H1 (cell line): ENCODE measurements at regions of chr6 and their contacts with region 1.

Region 1: DNA sequence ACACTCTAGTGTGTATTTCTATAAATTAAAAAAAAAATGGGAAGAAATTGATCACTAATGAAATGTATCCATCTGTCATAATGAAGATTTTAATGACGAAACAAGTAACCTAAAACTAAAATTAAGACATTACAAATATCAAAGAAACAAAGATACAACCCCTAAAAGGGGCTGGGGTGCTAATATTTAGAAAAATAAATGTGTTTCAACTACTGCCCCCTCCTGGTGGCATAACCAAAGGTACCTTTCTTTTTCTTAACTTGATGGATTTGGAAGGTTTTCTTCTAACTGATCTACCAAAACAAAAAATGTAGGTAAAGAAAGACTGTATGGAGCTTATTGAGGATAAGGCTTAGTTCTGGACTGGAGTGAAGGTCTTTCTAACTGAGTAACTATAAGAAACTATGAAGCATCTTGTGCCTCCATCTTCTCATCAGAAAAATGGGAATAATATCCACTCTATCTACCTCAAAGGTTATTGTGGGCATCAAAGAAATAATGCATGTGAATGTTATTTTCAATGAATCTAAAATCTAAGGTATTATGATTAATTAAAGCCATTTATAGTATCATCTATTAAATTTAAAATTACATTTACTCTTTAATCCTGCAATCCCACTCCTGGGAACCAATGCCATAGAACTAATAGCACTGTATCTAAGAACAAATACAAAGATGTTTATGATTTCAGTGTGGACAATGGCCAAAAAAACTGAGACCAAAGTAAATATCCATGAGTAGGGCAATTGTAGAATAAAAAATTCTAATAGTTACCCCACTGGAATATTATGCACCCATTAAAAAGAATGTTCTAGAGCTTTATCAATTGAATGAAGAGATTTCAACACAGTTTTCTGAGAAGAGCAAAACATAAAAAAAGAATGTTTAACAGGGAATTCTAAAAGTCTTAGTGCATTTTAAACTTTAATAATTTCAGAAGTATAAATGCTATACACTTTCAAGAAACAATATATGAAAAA is 117.2 kb downstream of the BACH2 start:
- DNase-seq: no peak
- H3K4me3 ChIP-seq: no peak overlapping the region
- H3K27ac ChIP-seq: no peak overlapping the region
- H3K4me1 ChIP-seq: no peaks in the 10 kb centered on the region
- H3K27me3 ChIP-seq: no peaks in the 10 kb centered on the region; a peak in 1 of 7 replicates
- CTCF ChIP-seq: peak in 2 of 3 experiments; percentile 21 to 44; a peak in 2 of 4 replicates
- EP300 ChIP-seq: no peak
- POLR2A ChIP-seq: no peak
- RAD21 ChIP-seq: peak; percentile 28 to 37; a peak in 3 of 4 replicates

Region 2: GRCh38 chr6:89952686-89953085 is 226.8 kb before region 1 on chr6:
- CTCF ChIA-PET with region 1: interaction called, 13 read pairs
- POLR2A ChIA-PET with region 1: no interaction called
- DNase-seq: no peak
- H3K4me3 ChIP-seq: no peak overlapping the region
- H3K27ac ChIP-seq: no peak overlapping the region
- H3K4me1 ChIP-seq: no peaks in the 10 kb centered on the region
- H3K27me3 ChIP-seq: no peaks in the 10 kb centered on the region
- CTCF ChIP-seq: no peak
- EP300 ChIP-seq: no peak
- POLR2A ChIP-seq: no peak
- RAD21 ChIP-seq: no peak

Region 3: GRCh38 chr6:90088009-90088408 is 91.5 kb before region 1 on chr6:
- CTCF ChIA-PET with region 1: no interaction called
- POLR2A ChIA-PET with region 1: no interaction called
- DNase-seq: no peak
- H3K4me3 ChIP-seq: no peak overlapping the region
- H3K27ac ChIP-seq: no peak overlapping the region
- H3K4me1 ChIP-seq: no peaks in the 10 kb centered on the region
- H3K27me3 ChIP-seq: no peaks in the 10 kb centered on the region
- CTCF ChIP-seq: no peak
- EP300 ChIP-seq: no peak
- POLR2A ChIP-seq: no peak
- RAD21 ChIP-seq: no peak

Region 4: GRCh38 chr6:90319044-90319443 is 139.6 kb after region 1 on chr6:
- CTCF ChIA-PET with region 1: no interaction called
- POLR2A ChIA-PET with region 1: no interaction called
- DNase-seq: no peak
- H3K4me3 ChIP-seq: no peak overlapping the region
- H3K27ac ChIP-seq: no peak overlapping the region
- H3K4me1 ChIP-seq: no peaks in the 10 kb centered on the region
- H3K27me3 ChIP-seq: no peaks in the 10 kb centered on the region
- CTCF ChIP-seq: no peak
- EP300 ChIP-seq: no peak
- POLR2A ChIP-seq: no peak
- RAD21 ChIP-seq: no peak